Activated CD4-positive, alpha-beta T cell treated with anti-CD3 and anti-CD28 coated beads, Interleukin-2, amount 10 ng/mL, durations not matched to agents 24 days and 14 days (primary cell): ENCODE measurements at regions of chr19 and their contacts with region 1.

Region 1: GRCh38 chr19:11738746-11739620 is at the start of gene ZNF823:
- DNase-seq: peak; percentile 99
- H3K4me3 Mint-ChIP-seq: peak within 1 kb of the TSS; percentile 96
- H3K27ac Mint-ChIP-seq: peak within 1 kb of the TSS; percentile 86
- H3K4me1 Mint-ChIP-seq: peaks cover 17% of the 10 kb centered on the region
- H3K27me3 Mint-ChIP-seq: peaks cover 8% of the 10 kb centered on the region
- total RNA-seq, gene ZNF823: 2.4 and 3.0 TPM in 2 replicates

Region 2: DNA sequence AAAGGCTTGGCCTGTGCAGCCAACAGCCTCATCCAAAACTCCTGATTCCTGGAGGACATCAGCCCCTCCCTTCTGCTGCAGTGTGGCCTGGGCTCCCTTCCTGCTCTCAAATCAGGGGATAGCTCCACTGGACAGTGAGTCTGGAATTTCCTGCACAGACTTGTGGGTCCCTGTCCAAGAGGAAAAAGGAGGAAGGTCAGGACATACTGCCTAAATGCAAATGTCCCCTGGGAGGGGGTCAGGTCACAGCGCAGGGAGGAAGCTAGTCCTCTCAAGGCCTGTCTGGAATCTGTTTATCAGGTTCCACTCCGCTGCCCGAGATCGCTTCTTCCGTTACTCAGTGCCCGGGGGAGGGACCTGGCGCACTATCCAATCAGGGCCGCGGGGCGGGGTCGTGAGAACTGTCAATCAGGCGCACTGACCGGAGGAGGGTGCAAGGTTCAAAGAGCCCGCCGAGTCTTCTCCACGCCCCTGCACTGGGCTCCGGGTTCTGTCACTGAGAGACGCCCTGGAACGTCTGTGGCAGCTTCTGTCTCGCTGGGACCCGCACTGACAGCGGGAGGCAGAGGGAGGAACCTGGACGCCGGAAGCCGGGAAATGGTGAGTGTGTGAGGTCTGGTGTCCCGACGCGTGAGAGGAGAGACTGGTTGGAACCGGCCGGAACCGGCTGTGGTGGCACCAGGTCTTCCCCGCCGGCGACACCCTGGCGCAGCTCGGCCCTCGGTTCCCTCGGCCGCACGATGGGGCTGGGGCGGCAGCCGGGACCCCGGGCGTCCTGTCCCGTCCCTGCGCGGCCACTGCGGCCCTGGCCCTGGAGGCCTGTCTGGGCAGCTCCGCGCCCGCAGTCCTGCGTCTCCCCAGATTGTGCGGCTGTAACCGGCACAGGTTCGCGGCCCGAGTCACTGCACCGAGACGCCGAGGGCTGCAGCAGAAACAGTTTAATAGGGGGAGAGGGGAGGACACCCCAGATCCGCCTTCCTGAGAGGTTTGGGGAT is 27.9 kb after region 1 on chr19 and contains the start of gene ZNF441:
- intact Hi-C with region 1: loop called (anchors 1 kb)
- DNase-seq: peak; percentile 97
- H3K4me3 Mint-ChIP-seq: peak within 1 kb of the TSS; percentile 97
- H3K27ac Mint-ChIP-seq: peak within 1 kb of the TSS; percentile 96
- H3K4me1 Mint-ChIP-seq: peaks cover 15% of the 10 kb centered on the region
- H3K27me3 Mint-ChIP-seq: no peaks in the 10 kb centered on the region
- total RNA-seq, gene ZNF441: 3.1 and 4.0 TPM in 2 replicates